Ascending aorta (tissue), 2 donors: ENCODE measurements at regions of chr12 and their contacts with region 1.

Region 1: DNA sequence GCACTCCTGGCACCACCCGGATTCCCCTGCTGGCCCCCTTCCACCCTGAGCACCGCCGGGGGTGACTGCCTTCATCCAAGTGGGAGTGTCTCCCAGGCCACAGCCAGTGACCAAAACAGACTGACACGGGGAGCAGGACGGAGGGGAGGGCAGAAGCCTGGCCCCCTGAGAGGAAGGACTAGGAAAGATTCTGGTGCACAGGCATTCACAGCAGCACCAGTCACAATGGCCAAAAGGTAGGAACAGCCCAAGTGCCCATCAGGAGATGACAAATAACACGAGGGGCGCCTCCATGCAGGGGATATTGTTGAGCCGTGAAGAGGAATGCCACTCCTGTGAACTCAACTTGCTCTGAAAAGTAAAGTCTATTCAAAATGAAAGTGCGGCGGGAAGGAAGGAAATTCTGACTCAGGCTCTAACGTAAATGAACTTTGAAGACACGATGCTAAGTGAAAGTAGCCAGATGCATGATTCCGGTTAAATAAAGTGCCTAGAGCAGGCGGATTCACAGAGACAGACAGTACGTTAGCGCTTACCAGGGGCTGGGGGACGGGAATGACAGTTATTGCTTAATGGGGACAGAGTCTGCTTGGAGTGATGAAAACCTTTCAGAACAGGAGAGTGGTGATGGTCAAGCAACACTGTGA is 146.1 kb upstream of the NCOR2 start:
- DNase-seq: peak in 1 of 2 donors; percentile 70
- H3K4me3 ChIP-seq: peak overlapping the region; percentile 4 to 48
- H3K27ac ChIP-seq: peak overlapping the region; percentile 65 to 72
- H3K4me1 ChIP-seq: peaks cover 0 to 5% of the 10 kb centered on the region in 2 donors
- H3K27me3 ChIP-seq: no peaks in the 10 kb centered on the region
- CTCF ChIP-seq: no peak

Region 2: GRCh38 chr12:124661341-124661740 is 52.2 kb before region 1 on chr12:
- intact Hi-C with region 1: loop called (anchors 5 kb)
- DNase-seq: no peak
- H3K4me3 ChIP-seq: no peak overlapping the region
- H3K27ac ChIP-seq: no peak overlapping the region
- H3K4me1 ChIP-seq: peaks cover 0 to 11% of the 10 kb centered on the region in 2 donors
- H3K27me3 ChIP-seq: no peaks in the 10 kb centered on the region
- CTCF ChIP-seq: no peak